ENCODE measurements at regions of chr20 and their contacts with region 1.

Region 1: GRCh38 chr20:25160467-25160866 is 35.0 kb upstream of the ENTPD6 start:
- DNase-seq: no peak
- H3K4me3 ChIP-seq: no peak overlapping the region
- H3K27ac ChIP-seq: no peak overlapping the region
- H3K4me1 ChIP-seq: no peaks in the 10 kb centered on the region
- H3K27me3 ChIP-seq: peaks cover 0 to 23% (median 0%) of the 10 kb centered on the region in 7 donors
- CTCF ChIP-seq: no peak
- POLR2A ChIP-seq: no peak

Region 2: GRCh38 chr20:25076731-25077609 is 83.5 kb before region 1 on chr20:
- intact Hi-C with region 1: loop called (anchors 10 kb)
- DNase-seq: no peak
- H3K4me3 ChIP-seq: peak overlapping the region in 3 of 8 donors; percentile 2 to 52 (median 23)
- H3K27ac ChIP-seq: no peak overlapping the region
- H3K4me1 ChIP-seq: peaks cover 0 to 28% (median 16%) of the 10 kb centered on the region in 6 donors
- H3K27me3 ChIP-seq: peaks cover 7 to 93% (median 63%) of the 10 kb centered on the region in 7 donors
- CTCF ChIP-seq: no peak
- POLR2A ChIP-seq: no peak

Region 3: DNA sequence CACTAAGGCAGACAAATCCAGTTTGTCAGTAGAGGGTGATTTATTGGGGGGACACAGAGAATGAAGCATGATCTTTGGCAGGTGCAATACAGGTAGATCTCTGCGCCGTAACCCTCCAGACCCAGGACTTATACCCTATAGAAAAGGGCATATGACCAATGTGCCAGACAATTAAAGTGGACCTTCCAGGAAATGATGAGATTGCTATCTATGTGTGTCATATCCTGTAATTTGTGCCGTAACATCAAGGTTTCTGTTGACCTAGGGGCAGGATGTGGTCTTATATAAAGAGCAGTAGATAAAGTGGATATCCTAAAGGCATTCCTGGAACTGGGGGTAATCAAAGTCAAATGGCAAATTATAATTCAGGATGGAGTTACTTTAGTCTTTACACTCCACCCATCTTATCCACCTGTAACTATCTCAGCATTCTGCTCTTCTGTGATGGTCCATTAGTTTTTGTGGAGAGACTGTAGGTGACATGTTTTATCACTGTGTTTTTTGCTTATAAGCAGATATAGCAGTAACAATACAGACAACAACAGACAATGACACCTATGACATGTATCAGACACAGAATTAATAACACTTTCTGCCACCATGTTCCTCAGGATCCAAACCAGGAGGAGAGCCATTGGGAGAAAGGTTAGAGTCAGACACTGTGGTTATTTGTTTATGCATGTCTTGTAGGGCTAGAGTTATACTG is 579.3 kb after region 1 on chr20:
- intact Hi-C with region 1: no loop called
- DNase-seq: no peak
- H3K4me3 ChIP-seq: no peak overlapping the region
- H3K27ac ChIP-seq: no peak overlapping the region
- H3K4me1 ChIP-seq: peaks cover 0 to 8% (median 0%) of the 10 kb centered on the region in 6 donors
- H3K27me3 ChIP-seq: no peaks in the 10 kb centered on the region
- CTCF ChIP-seq: no peak
- POLR2A ChIP-seq: no peak

Measured in spleen (tissue), 13 donors.